B cell (primary cell): ENCODE measurements at regions of chrX and their contacts with region 1.

Region 1: DNA sequence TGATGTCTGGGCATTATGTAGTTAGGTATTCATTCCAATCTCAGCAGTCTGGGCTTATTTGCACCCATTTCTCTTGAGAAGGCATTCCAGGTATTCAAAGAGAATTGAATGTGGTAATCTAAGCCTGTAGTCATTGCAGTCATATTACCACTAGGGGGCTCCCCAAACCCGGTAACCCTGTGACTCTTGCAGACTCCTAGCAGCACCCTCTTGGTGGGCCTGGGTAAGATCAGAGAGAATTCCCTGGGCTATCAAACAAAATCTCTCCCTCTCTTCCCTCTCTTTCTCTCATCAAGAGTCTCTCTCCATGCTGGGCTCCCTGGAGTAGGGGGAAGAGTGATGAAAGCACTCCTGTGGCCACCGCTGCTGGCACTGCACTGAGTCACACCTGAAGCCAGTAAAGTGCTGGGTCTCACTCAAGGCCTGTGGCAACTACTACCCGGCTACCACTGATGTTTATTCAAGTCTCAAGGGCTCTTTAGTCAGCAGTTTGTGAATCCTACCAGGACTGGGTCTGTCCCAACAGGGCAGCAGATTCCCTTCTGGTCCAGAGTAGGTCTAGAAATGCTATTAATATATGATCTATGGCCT is 187.7 kb upstream of the NUDT10 start:
- DNase-seq: peak; percentile 39
- ATAC-seq: no peak
- H3K4me3 ChIP-seq: no peak overlapping the region
- H3K4me3 Mint-ChIP-seq: no peak overlapping the region
- H3K27ac ChIP-seq: no peak overlapping the region
- H3K27ac Mint-ChIP-seq: no peak overlapping the region
- H3K4me1 ChIP-seq: no peaks in the 10 kb centered on the region
- H3K4me1 Mint-ChIP-seq: no peaks in the 10 kb centered on the region
- H3K27me3 ChIP-seq: no peaks in the 10 kb centered on the region
- H3K27me3 Mint-ChIP-seq: peaks cover 3% of the 10 kb centered on the region
- CTCF ChIP-seq: peak; percentile 65

Region 2: DNA sequence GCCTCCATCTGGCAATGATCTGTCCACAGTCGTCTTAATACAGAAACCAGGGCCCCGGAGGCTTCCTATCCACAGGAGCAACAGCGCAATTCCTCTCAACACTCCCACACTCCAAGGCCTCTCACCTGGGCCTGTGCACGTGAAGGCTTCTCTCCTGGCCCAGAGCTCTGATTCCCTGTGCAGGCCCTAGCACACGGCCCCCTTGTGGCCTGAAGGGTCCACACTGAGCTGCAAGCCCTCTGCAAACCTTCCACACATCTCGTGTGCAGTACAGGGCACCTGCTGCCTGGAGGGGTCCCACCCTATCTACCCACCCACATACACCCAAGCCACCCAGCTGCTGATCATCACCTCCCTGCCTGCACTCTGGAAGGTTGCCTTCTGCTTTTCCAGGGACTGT is 37.6 kb after region 1 on chrX:
- CTCF ChIA-PET with region 1: no interaction called
- POLR2A ChIA-PET with region 1: no interaction called
- intact Hi-C with region 1: no loop called
- DNase-seq: no peak
- ATAC-seq: no peak
- H3K4me3 ChIP-seq: no peak overlapping the region
- H3K4me3 Mint-ChIP-seq: no peak overlapping the region
- H3K27ac ChIP-seq: no peak overlapping the region
- H3K27ac Mint-ChIP-seq: no peak overlapping the region
- H3K4me1 ChIP-seq: no peaks in the 10 kb centered on the region
- H3K4me1 Mint-ChIP-seq: peaks cover 6% of the 10 kb centered on the region
- H3K27me3 ChIP-seq: no peaks in the 10 kb centered on the region
- H3K27me3 Mint-ChIP-seq: no peaks in the 10 kb centered on the region
- CTCF ChIP-seq: no peak

Region 3: GRCh38 chrX:51461053-51462044 is 316.4 kb after region 1 on chrX:
- CTCF ChIA-PET with region 1: interaction called, 18 read pairs
- POLR2A ChIA-PET with region 1: no interaction called
- intact Hi-C with region 1: no loop called
- DNase-seq: peak; percentile 61
- ATAC-seq: no peak
- H3K4me3 ChIP-seq: no peak overlapping the region
- H3K4me3 Mint-ChIP-seq: no peak overlapping the region
- H3K27ac ChIP-seq: no peak overlapping the region
- H3K27ac Mint-ChIP-seq: no peak overlapping the region
- H3K4me1 ChIP-seq: no peaks in the 10 kb centered on the region
- H3K4me1 Mint-ChIP-seq: no peaks in the 10 kb centered on the region
- H3K27me3 ChIP-seq: no peaks in the 10 kb centered on the region
- H3K27me3 Mint-ChIP-seq: no peaks in the 10 kb centered on the region
- CTCF ChIP-seq: peak; percentile 78